Ovary (tissue), 10 donors: ENCODE measurements at regions of chr1 and their contacts with region 1.

Region 1: GRCh38 chr1:117059678-117060440 is at the start of gene TTF2:
- DNase-seq: peak; percentile 86 to 92 (median 89)
- H3K4me3 ChIP-seq: peak within 1 kb of the TSS; percentile 44
- H3K27ac ChIP-seq: peak within 1 kb of the TSS in 1 of 2 donors; percentile 10
- H3K4me1 ChIP-seq: peaks cover 4% of the 10 kb centered on the region
- H3K27me3 ChIP-seq: no peaks in the 10 kb centered on the region
- CTCF ChIP-seq: peak in 2 of 3 donors; percentile 17 to 43
- EP300 ChIP-seq: no peak
- POLR2A ChIP-seq: no peak
- total RNA-seq, gene TTF2: 8.2 to 14.0 (median 12.5) TPM

Region 2: GRCh38 chr1:115296981-115297380 is 1762.9 kb before region 1 on chr1:
- intact Hi-C with region 1: no loop called
- DNase-seq: no peak
- H3K4me3 ChIP-seq: no peak overlapping the region
- H3K27ac ChIP-seq: no peak overlapping the region
- H3K4me1 ChIP-seq: peaks cover 8% of the 10 kb centered on the region
- H3K27me3 ChIP-seq: no peaks in the 10 kb centered on the region
- CTCF ChIP-seq: no peak
- EP300 ChIP-seq: no peak
- POLR2A ChIP-seq: no peak

Region 3: DNA sequence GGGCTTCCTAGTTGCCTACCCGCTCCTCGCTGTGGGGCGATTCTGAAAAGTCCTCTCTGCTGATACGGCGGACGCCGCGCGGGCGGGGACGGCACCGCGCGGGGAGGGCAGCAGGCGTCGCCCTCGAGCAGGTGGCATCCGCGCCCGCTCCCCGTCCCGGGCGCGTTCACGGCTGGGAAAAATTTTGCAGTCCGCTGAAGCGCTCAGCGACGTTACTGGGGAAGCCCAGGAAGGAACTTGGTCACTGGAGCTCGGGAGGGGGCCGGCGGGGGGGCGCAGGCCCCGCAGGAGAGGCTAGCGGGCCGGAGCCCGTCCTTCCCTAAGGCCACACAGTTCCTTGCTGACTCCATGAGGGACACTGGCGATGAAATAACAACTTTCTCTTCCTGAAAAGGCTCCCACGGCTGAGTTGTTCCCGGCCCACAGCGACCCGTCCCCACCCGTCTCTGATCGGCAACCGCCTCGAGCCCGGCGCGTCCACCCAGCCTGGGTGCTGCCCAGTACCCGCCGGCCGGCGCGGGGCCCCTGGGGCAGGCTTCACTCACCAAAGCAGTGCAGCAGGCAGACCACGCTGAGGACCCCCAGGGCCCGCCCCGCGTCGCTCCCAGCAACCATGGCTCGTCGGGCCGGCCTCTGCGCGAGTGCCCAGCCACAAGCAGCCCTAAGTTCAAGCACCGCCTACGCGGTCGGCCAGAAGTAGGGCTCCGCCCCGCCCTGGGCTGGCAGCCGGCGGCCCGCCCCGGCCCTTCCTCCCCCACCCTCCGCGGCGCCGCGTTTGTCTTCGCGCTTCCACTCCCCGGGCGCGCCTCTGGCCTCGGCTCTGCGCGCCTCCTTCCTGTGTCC is 489.3 kb before region 1 on chr1 and contains the start of gene CD58:
- intact Hi-C with region 1: loop called in 1 of 4 experiments (anchors 5 kb)
- DNase-seq: peak; percentile 76 to 86 (median 80)
- H3K4me3 ChIP-seq: peak within 1 kb of the TSS; percentile 97
- H3K27ac ChIP-seq: peak within 1 kb of the TSS; percentile 79 to 85
- H3K4me1 ChIP-seq: no peaks in the 10 kb centered on the region
- H3K27me3 ChIP-seq: no peaks in the 10 kb centered on the region
- CTCF ChIP-seq: peak in 2 of 3 donors; percentile 38 to 45
- EP300 ChIP-seq: no peak
- POLR2A ChIP-seq: peak; percentile 28
- total RNA-seq, gene CD58: 5.2 to 10.9 (median 6.3) TPM

Region 4: DNA sequence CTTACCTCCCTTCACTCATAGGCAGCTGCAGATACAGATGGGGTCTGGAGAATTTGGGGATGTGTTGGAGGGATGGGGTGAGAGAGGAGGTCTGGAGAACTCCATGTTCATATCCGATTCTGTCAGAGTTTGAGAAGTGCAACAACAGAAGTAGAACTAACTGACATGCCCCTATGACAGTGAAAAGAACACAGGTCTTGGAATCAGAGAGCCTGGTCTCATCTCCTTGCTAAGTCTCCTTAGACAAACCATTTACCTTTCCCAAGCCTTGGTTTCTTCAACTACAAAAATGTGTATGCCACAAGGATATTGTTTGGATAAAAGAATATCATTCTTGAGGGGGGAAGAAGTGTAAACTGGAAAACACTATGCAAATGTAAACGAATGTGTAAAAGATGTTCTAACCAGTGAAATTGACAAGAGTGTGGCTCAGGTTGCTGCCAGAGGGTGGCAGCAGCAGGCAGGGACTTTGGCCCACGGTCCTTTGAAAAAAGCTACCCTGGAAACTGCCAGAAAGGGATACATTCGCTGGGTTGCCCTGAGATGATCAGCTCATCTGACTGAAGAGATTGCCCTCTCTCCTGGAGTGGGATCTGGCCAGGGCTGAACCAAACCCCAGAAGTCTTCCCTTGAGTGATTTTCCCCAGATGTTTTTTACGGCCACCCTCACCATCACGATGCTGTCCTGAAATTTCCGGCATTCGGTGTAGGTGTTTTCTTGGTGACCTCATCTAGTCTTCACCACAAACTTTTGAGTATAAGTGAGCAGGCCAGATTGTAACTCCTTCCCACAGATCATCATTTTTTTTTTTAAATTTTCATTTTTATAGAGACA is 322.6 kb before region 1 on chr1:
- intact Hi-C with region 1: loop called in 2 of 4 experiments (anchors 5 to 10 kb)
- DNase-seq: peak in 3 of 5 donors; percentile 22 to 47 (median 26)
- H3K4me3 ChIP-seq: no peak overlapping the region
- H3K27ac ChIP-seq: no peak overlapping the region
- H3K4me1 ChIP-seq: no peaks in the 10 kb centered on the region
- H3K27me3 ChIP-seq: no peaks in the 10 kb centered on the region
- CTCF ChIP-seq: no peak
- EP300 ChIP-seq: no peak
- POLR2A ChIP-seq: no peak

Region 5: DNA sequence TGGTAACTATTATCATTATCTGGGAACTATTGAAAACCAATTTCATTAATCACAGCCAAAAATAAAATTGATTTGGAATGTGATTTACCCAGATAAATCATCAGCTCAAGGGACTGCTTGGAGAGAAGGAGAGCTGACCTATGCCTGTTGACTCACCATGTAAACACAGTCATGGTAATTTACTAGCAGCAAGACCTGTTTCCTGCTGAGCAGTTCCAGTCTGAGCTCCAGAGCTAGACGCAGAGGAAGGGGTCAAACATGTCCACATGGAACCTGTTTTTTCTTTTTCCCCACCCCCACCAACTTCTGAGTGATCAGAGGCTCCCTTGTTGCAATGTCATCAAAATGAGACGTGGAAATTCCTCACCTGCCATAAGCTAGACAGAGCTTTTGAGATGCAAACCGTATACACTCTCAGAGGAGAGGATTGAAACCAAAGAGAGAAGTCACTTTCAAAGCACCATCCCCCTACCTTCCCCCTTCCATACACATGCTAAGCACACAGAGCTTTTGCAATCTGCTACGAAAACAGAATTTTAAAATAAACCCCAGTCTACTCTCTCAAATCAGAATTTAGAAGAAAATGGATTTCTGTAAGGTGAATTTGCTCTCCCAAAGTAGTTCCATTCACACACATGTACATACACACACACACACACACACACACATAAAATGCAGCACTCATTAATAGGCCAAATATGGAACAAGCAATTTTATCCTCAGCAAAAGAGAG is 206.0 kb before region 1 on chr1:
- intact Hi-C with region 1: loop called in 2 of 4 experiments (anchors 10 kb)
- DNase-seq: no peak
- H3K4me3 ChIP-seq: no peak overlapping the region
- H3K27ac ChIP-seq: no peak overlapping the region
- H3K4me1 ChIP-seq: peaks cover 4% of the 10 kb centered on the region
- H3K27me3 ChIP-seq: no peaks in the 10 kb centered on the region
- CTCF ChIP-seq: no peak
- EP300 ChIP-seq: no peak
- POLR2A ChIP-seq: no peak

Region 6: GRCh38 chr1:117284399-117285215 is 224.7 kb after region 1 on chr1:
- intact Hi-C with region 1: loop called in 1 of 4 experiments (anchors 10 kb)
- DNase-seq: no peak
- H3K4me3 ChIP-seq: no peak overlapping the region
- H3K27ac ChIP-seq: no peak overlapping the region
- H3K4me1 ChIP-seq: no peaks in the 10 kb centered on the region
- H3K27me3 ChIP-seq: no peaks in the 10 kb centered on the region
- CTCF ChIP-seq: peak in 2 of 3 donors; percentile 33 to 46
- EP300 ChIP-seq: no peak
- POLR2A ChIP-seq: no peak

Region 7: DNA sequence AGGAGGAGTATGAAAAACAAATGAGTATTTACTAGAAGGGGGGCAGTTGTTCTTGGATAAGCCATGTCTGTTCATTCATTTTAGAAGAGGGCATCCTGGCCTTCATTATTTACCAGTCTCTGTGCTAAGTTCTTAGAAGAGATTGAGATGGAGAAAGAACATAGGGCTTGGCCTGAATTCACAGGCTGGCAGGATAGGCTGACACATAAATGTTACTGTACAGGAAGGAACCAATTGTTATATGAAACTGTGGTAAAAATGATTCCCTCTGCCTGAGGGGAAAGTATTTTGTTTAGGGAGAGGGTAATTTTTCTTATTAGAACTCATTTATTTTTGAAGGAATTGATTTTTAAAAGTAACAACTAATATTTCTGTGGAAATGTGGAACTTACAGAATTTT is 406.9 kb after region 1 on chr1:
- intact Hi-C with region 1: no loop called
- DNase-seq: no peak
- H3K4me3 ChIP-seq: no peak overlapping the region
- H3K27ac ChIP-seq: no peak overlapping the region
- H3K4me1 ChIP-seq: no peaks in the 10 kb centered on the region
- H3K27me3 ChIP-seq: no peaks in the 10 kb centered on the region
- CTCF ChIP-seq: no peak
- EP300 ChIP-seq: no peak
- POLR2A ChIP-seq: no peak